ENCODE measurements at regions of chr11 and their contacts with region 1.

Region 1: DNA sequence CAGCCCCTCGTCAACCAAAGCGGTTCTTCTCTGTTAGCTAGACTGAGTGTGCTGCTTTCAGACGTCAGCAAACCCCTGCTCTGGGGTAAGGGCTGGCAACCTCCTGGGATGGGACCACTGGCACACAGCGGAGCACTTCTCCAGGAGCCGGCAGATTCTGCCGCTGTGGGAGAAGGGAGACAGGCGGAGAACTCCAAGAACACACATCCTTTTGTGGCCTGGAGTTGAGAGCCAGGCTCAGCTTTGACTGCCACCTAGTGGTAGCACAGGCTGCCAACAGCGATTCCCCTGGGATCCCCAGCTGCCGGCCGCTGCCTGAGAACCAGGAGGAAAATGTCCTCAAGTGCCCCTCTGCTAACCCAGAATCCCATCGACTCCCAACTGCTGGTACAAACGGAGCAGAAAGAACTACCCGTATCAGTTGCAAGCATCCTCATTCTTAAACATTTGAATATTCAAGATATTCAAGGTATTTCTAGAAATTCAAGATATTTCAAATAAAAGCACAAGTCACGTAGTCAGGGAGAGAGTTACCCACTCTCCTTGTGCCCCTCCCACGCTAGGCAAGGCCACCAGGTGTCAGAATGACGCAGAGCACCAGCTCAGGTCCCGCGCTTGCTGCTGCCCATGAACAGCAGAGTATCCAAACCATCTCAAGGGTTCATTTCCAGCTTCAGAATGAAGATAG is 4.9 kb downstream of the LTO1 start:
- DNase-seq: peak; percentile 84 to 89 (median 88)
- ATAC-seq: peak; percentile 53 to 78 (median 70)
- H3K4me3 ChIP-seq: no peak overlapping the region
- H3K27ac ChIP-seq: peak overlapping the region in 4 of 12 donors; percentile 2 to 42 (median 22)
- H3K4me1 ChIP-seq: peaks cover 0 to 32% (median 23%) of the 10 kb centered on the region in 12 donors
- H3K27me3 ChIP-seq: no peaks in the 10 kb centered on the region
- CTCF ChIP-seq: peak; percentile 91 to 99 (median 96)
- POLR2A ChIP-seq: no peak

Region 2: GRCh38 chr11:69101115-69101791 is 569.0 kb before region 1 on chr11:
- intact Hi-C with region 1: loop called in 8 of 10 experiments (anchors 1 to 5 kb)
- DNase-seq: peak; percentile 64 to 85 (median 81)
- ATAC-seq: peak; percentile 72 to 86 (median 83)
- H3K4me3 ChIP-seq: no peak overlapping the region
- H3K27ac ChIP-seq: no peak overlapping the region
- H3K4me1 ChIP-seq: peaks cover 0 to 20% (median 9%) of the 10 kb centered on the region in 12 donors
- H3K27me3 ChIP-seq: no peaks in the 10 kb centered on the region
- CTCF ChIP-seq: peak; percentile 96 to 100 (median 100)
- POLR2A ChIP-seq: no peak

Measured in heart left ventricle (tissue), 16 donors.